ENCODE measurements at regions of chr12 and their contacts with region 1.

Region 1: DNA sequence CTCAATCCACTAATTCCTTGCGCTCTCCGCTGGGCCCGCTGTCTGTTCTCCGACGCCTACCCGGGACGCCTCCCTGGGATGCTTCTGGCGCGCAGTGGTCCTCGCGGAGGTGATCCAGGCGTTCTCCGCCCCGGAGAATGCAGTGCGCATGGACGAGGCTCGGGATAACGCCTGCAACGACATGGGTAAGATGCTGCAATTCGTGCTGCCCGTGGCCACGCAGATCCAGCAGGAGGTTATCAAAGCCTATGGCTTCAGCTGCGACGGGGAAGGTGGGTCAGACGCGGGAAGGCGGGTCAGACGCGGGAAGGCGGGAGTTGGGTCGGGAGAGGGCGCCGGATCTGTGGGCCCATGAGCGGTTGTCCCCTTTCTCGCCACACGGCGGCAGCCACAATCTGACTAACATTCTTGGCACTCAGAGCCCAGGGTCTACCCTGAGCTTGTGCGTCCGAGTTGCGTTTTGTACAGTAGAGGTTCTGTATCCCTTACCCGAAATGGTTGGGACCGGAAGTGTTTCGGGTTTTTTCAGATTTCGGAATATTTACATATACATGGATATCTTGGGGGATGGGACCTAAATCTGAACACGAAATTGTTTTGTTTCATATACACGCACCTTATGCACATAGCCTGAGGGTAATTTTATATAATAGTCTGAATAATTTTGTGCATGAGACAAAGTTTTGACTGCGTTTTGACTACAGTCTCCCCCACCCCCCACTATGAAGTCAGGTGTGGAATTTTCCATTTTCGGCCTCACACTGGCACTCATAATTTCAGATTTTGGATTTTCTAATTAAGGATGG is 762 bp downstream of the C12orf57 start:
- DNase-seq: peak; percentile 84 to 90 (median 85)
- H3K4me3 ChIP-seq: peak overlapping the region; percentile 87 to 90
- H3K4me3 Mint-ChIP-seq: peak overlapping the region; percentile 91 to 99 (median 98)
- H3K27ac ChIP-seq: peak overlapping the region; percentile 91
- H3K27ac Mint-ChIP-seq: peak overlapping the region; percentile 95 to 100 (median 98)
- H3K4me1 ChIP-seq: peaks cover 66% of the 10 kb centered on the region
- H3K4me1 Mint-ChIP-seq: peaks cover 37 to 74% (median 60%) of the 10 kb centered on the region in 4 donors
- H3K27me3 ChIP-seq: no peaks in the 10 kb centered on the region
- H3K27me3 Mint-ChIP-seq: no peaks in the 10 kb centered on the region

Region 2: GRCh38 chr12:6890789-6891645 is 53.6 kb before region 1 on chr12:
- CTCF ChIA-PET with region 1: no interaction called
- POLR2A ChIA-PET with region 1: interaction called, 20 read pairs
- intact Hi-C with region 1: no loop called
- DNase-seq: peak; percentile 97 to 98 (median 98)
- H3K4me3 ChIP-seq: peak overlapping the region; percentile 74 to 93
- H3K4me3 Mint-ChIP-seq: peak overlapping the region; percentile 82 to 87 (median 85)
- H3K27ac ChIP-seq: peak overlapping the region; percentile 91
- H3K27ac Mint-ChIP-seq: peak overlapping the region; percentile 92 to 98 (median 95)
- H3K4me1 ChIP-seq: peaks cover 16% of the 10 kb centered on the region
- H3K4me1 Mint-ChIP-seq: peaks cover 5 to 15% (median 11%) of the 10 kb centered on the region in 4 donors
- H3K27me3 ChIP-seq: no peaks in the 10 kb centered on the region
- H3K27me3 Mint-ChIP-seq: no peaks in the 10 kb centered on the region

Region 3: GRCh38 chr12:6921996-6922946 is 22.3 kb before region 1 on chr12:
- CTCF ChIA-PET with region 1: interaction called, 77 read pairs
- POLR2A ChIA-PET with region 1: interaction called, 280 read pairs
- intact Hi-C with region 1: loop called (anchors 1 kb)
- DNase-seq: no peak
- H3K4me3 ChIP-seq: no peak overlapping the region
- H3K4me3 Mint-ChIP-seq: no peak overlapping the region
- H3K27ac ChIP-seq: no peak overlapping the region
- H3K27ac Mint-ChIP-seq: peak overlapping the region in 4 of 7 donors; percentile 30 to 95 (median 49)
- H3K4me1 ChIP-seq: peaks cover 19% of the 10 kb centered on the region
- H3K4me1 Mint-ChIP-seq: peaks cover 13 to 33% (median 20%) of the 10 kb centered on the region in 4 donors
- H3K27me3 ChIP-seq: no peaks in the 10 kb centered on the region
- H3K27me3 Mint-ChIP-seq: no peaks in the 10 kb centered on the region

Region 4: DNA sequence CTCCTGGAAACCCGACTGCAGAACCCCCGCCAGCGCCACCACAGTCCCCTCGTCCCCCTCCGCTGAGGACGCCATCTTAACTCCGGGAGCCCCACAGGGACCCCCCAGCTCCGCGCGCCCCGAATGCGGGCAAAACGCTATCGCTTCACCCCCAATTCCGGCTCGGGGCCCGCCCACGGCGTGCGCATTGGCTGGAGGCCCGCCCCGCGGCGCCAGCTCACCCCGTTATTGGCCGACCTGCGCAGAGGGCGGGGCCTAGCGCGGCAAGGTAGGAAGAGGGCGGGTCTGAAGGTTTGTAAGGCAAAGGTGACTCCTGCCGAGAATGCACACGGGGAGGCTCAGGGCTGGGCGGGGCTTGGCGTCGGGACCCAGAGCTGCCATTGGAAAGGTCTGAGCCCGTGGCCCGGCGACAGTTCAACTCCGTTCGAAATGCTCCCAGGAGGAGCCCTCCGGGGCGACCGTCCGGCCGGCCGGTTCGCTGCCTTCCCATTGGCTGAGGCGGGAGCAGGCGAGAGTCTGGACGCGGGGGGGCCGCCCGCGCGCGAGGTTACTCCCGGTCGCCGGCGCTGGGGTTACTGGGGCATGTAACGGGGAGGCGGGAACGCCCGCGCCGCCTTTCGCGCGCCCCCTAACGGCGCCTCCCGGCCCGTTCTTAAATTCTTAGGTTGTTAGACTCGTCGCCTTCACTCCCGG is 73.9 kb after region 1 on chr12 and contains the start of gene LPCAT3:
- CTCF ChIA-PET with region 1: interaction called, 15 read pairs
- POLR2A ChIA-PET with region 1: interaction called, 48 read pairs
- intact Hi-C with region 1: loop called (anchors 1 kb)
- DNase-seq: peak; percentile 98 to 99 (median 98)
- H3K4me3 ChIP-seq: peak within 1 kb of the TSS; percentile 72 to 76
- H3K4me3 Mint-ChIP-seq: peak within 1 kb of the TSS; percentile 86 to 99 (median 95)
- H3K27ac ChIP-seq: peak within 1 kb of the TSS; percentile 85
- H3K27ac Mint-ChIP-seq: peak within 1 kb of the TSS; percentile 90 to 98 (median 95)
- H3K4me1 ChIP-seq: peaks cover 23% of the 10 kb centered on the region
- H3K4me1 Mint-ChIP-seq: peaks cover 18 to 37% (median 24%) of the 10 kb centered on the region in 4 donors
- H3K27me3 ChIP-seq: no peaks in the 10 kb centered on the region
- H3K27me3 Mint-ChIP-seq: no peaks in the 10 kb centered on the region
- total RNA-seq, gene LPCAT3: 18.3 to 21.6 TPM

Region 5: GRCh38 chr12:7038591-7038990 is 94.0 kb after region 1 on chr12:
- CTCF ChIA-PET with region 1: no interaction called
- POLR2A ChIA-PET with region 1: no interaction called
- intact Hi-C with region 1: no loop called
- DNase-seq: no peak
- H3K4me3 ChIP-seq: no peak overlapping the region
- H3K4me3 Mint-ChIP-seq: peak overlapping the region in 1 of 8 donors; percentile 26
- H3K27ac ChIP-seq: no peak overlapping the region
- H3K27ac Mint-ChIP-seq: no peak overlapping the region
- H3K4me1 ChIP-seq: no peaks in the 10 kb centered on the region
- H3K4me1 Mint-ChIP-seq: no peaks in the 10 kb centered on the region
- H3K27me3 ChIP-seq: no peaks in the 10 kb centered on the region
- H3K27me3 Mint-ChIP-seq: no peaks in the 10 kb centered on the region

Measured in CD4-positive, alpha-beta memory T cell (primary cell).